ENCODE measurements at regions of chr22 and their contacts with region 1.

Region 1: GRCh38 chr22:39502109-39502788 is at the start of gene MIEF1:
- DNase-seq: peak; percentile 98
- H3K4me3 Mint-ChIP-seq: peak within 1 kb of the TSS; percentile 96
- H3K27ac Mint-ChIP-seq: peak within 1 kb of the TSS; percentile 87
- H3K4me1 Mint-ChIP-seq: peaks cover 43% of the 10 kb centered on the region
- H3K27me3 Mint-ChIP-seq: no peaks in the 10 kb centered on the region
- total RNA-seq, gene MIEF1: 40.3 to 43.1 TPM

Region 2: GRCh38 chr22:39395936-39396796 is 106.1 kb before region 1 on chr22:
- CTCF ChIA-PET with region 1: interaction called, 3 read pairs
- POLR2A ChIA-PET with region 1: no interaction called
- intact Hi-C with region 1: loop called (anchors 5 kb)
- DNase-seq: no peak
- H3K4me3 Mint-ChIP-seq: no peak overlapping the region
- H3K27ac Mint-ChIP-seq: no peak overlapping the region
- H3K4me1 Mint-ChIP-seq: peaks cover 7% of the 10 kb centered on the region
- H3K27me3 Mint-ChIP-seq: no peaks in the 10 kb centered on the region

Region 3: GRCh38 chr22:39428578-39429071 is 73.6 kb before region 1 on chr22:
- CTCF ChIA-PET with region 1: no interaction called
- POLR2A ChIA-PET with region 1: no interaction called
- intact Hi-C with region 1: no loop called
- DNase-seq: no peak
- H3K4me3 Mint-ChIP-seq: no peak overlapping the region
- H3K27ac Mint-ChIP-seq: no peak overlapping the region
- H3K4me1 Mint-ChIP-seq: no peaks in the 10 kb centered on the region
- H3K27me3 Mint-ChIP-seq: no peaks in the 10 kb centered on the region